ENCODE measurements at regions of chr1 and their contacts with region 1.

Region 1: GRCh38 chr1:30407865-30408580 is 315.4 kb downstream of the MATN1 start:
- DNase-seq: no peak
- ATAC-seq: no peak
- H3K4me3 ChIP-seq: no peak overlapping the region
- H3K27ac ChIP-seq: no peak overlapping the region
- H3K4me1 ChIP-seq: no peaks in the 10 kb centered on the region
- H3K27me3 ChIP-seq: no peaks in the 10 kb centered on the region
- CTCF ChIP-seq: no peak

Region 2: GRCh38 chr1:29394521-29395225 is 1013.4 kb before region 1 on chr1:
- intact Hi-C with region 1: loop called in 1 of 3 experiments (anchors 5 kb)
- DNase-seq: no peak
- ATAC-seq: no peak
- H3K4me3 ChIP-seq: no peak overlapping the region
- H3K27ac ChIP-seq: no peak overlapping the region
- H3K4me1 ChIP-seq: no peaks in the 10 kb centered on the region
- H3K27me3 ChIP-seq: no peaks in the 10 kb centered on the region
- CTCF ChIP-seq: no peak